ENCODE measurements at regions of chr10 and their contacts with region 1.

Region 1: GRCh38 chr10:49194212-49194920 is 6.2 kb upstream of the TMEM273 start:
- DNase-seq: no peak
- ATAC-seq: no peak
- H3K4me3 Mint-ChIP-seq: peak overlapping the region; percentile 16
- H3K27ac Mint-ChIP-seq: peak overlapping the region; percentile 76
- H3K4me1 Mint-ChIP-seq: peaks cover 39% of the 10 kb centered on the region
- H3K27me3 Mint-ChIP-seq: peaks cover 8% of the 10 kb centered on the region
- CTCF ChIP-seq: no peak

Region 2: DNA sequence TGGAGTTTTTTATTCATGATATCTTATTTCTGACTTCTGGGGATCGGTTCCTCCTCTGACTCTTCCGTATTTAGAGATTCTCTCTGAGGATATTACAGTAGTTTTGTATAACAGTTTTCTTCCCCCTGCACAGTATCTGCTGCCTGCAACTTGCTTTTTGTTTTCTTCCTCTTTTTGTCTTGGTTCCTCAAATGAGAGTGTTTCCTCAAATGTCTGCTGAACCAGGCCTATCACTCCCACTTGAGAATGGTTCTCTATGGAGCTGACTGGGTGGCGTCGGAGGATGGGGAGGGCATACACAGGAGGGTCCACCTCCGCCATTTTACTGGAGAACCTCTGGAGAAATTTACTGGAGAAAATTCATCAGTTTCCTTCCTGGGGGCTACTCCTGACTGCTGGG is 617.2 kb before region 1 on chr10:
- CTCF ChIA-PET with region 1: no interaction called
- POLR2A ChIA-PET with region 1: no interaction called
- intact Hi-C with region 1: loop called (anchors 10 kb)
- DNase-seq: no peak
- ATAC-seq: peak; percentile 65
- H3K4me3 Mint-ChIP-seq: peak overlapping the region; percentile 41
- H3K27ac Mint-ChIP-seq: peak overlapping the region; percentile 82
- H3K4me1 Mint-ChIP-seq: peaks cover 92% of the 10 kb centered on the region
- H3K27me3 Mint-ChIP-seq: no peaks in the 10 kb centered on the region
- CTCF ChIP-seq: no peak

Region 3: DNA sequence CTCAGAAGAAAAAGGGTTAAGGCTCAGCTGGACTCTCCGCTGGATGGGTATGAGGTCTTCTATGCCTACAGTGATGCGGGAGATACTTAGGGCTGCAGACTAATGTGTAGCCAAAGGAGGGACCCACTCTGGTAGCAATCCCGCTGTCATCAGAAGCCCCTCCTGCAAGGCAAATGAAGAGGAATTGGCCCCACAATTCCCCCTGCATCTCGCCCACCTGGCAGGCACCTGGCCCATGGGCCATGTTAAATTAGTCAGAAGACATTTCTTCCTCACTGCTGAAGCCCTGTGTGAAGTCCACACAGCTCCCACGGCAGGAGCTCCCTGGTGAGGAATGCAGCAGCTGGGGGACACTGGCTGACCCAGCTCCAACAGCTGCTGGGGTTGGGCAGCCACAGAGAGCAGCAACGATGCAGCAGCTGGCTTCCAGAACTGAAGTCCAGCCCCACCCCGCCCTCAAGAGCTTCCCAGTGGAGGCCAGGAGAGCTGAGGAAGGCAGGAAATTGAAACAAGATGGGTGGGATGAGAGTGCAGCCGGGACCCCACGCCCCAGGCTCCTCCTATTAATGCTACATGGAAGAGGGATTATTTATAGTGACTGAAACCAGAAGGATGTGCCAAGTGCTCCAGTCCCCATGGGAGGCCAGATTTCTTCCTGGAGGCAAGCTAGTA is 84.6 kb before region 1 on chr10:
- CTCF ChIA-PET with region 1: no interaction called
- POLR2A ChIA-PET with region 1: no interaction called
- intact Hi-C with region 1: no loop called
- DNase-seq: no peak
- ATAC-seq: no peak
- H3K4me3 Mint-ChIP-seq: no peak overlapping the region
- H3K27ac Mint-ChIP-seq: no peak overlapping the region
- H3K4me1 Mint-ChIP-seq: peaks cover 2% of the 10 kb centered on the region
- H3K27me3 Mint-ChIP-seq: peaks cover 23% of the 10 kb centered on the region
- CTCF ChIP-seq: no peak

Region 4: DNA sequence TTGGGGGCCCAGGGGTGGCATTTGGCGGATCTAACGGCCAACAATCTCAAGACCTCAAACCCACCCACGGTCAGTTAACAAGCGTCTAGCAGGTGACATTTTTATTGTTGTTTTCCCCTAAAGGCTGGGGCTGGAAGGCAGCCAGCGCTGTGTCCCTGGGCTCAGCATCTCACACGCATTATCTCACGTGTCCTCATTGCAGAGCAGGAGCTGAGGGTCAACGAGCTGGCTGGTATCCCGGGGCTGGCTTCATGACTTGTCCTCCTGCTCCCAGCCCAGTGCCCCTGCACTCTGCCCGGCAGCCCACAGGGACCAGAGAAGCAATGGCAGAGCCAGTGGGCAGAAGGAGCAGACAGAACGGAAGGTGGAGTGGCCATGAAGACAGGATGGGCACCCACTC is 48.2 kb after region 1 on chr10:
- CTCF ChIA-PET with region 1: no interaction called
- POLR2A ChIA-PET with region 1: no interaction called
- intact Hi-C with region 1: loop called (anchors 2 kb)
- DNase-seq: no peak
- ATAC-seq: no peak
- H3K4me3 Mint-ChIP-seq: no peak overlapping the region
- H3K27ac Mint-ChIP-seq: no peak overlapping the region
- H3K4me1 Mint-ChIP-seq: peaks cover 14% of the 10 kb centered on the region
- H3K27me3 Mint-ChIP-seq: no peaks in the 10 kb centered on the region
- CTCF ChIP-seq: no peak

Region 5: DNA sequence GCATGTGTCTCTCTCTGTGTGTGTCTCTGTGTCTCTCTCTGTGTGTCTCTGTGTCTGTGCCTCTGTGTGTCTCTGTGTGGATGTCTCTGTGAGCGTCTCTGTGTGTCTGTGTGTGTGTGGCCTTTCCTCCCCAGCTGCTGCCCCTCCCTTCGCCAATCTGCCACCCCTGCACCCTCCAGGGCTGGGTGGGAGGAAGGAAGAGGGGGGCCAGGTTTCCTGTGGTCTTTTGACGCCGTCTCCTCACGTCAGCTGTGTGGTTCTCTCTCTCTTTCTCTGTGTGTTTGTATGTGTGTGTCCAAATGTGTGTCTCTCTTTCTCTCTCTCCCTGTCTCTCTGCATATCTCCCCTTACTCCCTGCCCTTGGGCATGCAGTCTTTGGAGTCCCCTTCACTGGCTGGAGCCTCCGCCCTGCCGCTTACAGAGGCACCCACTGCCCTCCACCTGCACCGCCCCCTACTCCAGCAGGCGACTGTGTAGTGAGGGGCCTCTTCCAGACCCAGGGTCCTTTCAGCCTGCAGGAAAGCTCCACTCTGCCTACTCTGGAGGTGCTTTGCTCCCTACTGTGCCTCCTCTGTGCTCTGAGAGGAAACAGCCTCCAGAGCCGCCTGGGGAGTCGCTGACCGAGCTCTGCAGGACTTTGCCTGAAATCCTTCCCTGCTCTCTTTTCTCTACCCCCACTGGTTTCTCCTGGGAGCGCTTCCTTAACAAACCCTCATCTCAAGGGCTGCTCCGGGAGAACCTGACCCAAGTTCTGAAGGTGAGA is 60.4 kb after region 1 on chr10:
- CTCF ChIA-PET with region 1: no interaction called
- POLR2A ChIA-PET with region 1: no interaction called
- intact Hi-C with region 1: loop called (anchors 5 kb)
- DNase-seq: no peak
- ATAC-seq: no peak
- H3K4me3 Mint-ChIP-seq: no peak overlapping the region
- H3K27ac Mint-ChIP-seq: no peak overlapping the region
- H3K4me1 Mint-ChIP-seq: no peaks in the 10 kb centered on the region
- H3K27me3 Mint-ChIP-seq: no peaks in the 10 kb centered on the region
- CTCF ChIP-seq: no peak

Region 6: GRCh38 chr10:49309626-49310411 is 115.5 kb after region 1 on chr10:
- CTCF ChIA-PET with region 1: no interaction called
- POLR2A ChIA-PET with region 1: no interaction called
- intact Hi-C with region 1: no loop called
- DNase-seq: no peak
- ATAC-seq: peak; percentile 69
- H3K4me3 Mint-ChIP-seq: peak overlapping the region; percentile 74
- H3K27ac Mint-ChIP-seq: peak overlapping the region; percentile 81
- H3K4me1 Mint-ChIP-seq: peaks cover 25% of the 10 kb centered on the region
- H3K27me3 Mint-ChIP-seq: no peaks in the 10 kb centered on the region
- CTCF ChIP-seq: no peak

Region 7: DNA sequence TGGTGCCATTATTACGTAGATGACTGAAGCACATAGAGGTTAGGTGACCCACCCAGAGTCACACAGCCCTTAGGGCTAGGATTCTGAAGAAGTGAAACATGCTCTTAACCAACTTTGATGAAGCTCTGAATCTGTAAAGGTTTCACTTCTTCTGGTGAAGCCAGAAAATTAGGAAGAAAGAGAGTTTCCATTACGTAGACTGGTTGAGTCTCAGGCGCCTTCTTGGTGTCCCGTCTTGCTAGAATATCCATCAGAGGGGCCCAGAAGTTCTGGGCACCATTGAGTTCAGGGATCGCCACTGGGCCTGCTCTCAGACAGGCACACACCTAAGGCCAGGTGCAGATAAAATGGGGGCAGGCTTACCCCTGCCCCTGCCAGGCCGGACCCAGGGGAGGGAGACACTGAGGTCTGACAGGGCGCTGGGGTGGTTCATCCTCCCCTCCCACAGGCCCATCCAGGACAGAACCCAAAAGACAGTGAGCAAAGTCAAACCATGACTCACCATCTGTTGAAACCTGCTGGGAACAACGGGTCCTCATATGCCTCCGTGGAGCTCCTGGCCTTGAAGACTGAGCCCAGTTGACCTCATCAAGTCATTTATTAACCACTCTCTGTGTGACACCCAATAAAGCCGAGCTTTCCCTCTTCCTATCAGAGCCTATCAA is 168.4 kb after region 1 on chr10:
- CTCF ChIA-PET with region 1: no interaction called
- POLR2A ChIA-PET with region 1: no interaction called
- intact Hi-C with region 1: loop called (anchors 2 kb)
- DNase-seq: no peak
- ATAC-seq: peak; percentile 84
- H3K4me3 Mint-ChIP-seq: peak overlapping the region; percentile 54
- H3K27ac Mint-ChIP-seq: peak overlapping the region; percentile 71
- H3K4me1 Mint-ChIP-seq: peaks cover 12% of the 10 kb centered on the region
- H3K27me3 Mint-ChIP-seq: peaks cover 3% of the 10 kb centered on the region
- CTCF ChIP-seq: no peak